ENCODE measurements at regions of chr16 and their contacts with region 1.

Region 1: DNA sequence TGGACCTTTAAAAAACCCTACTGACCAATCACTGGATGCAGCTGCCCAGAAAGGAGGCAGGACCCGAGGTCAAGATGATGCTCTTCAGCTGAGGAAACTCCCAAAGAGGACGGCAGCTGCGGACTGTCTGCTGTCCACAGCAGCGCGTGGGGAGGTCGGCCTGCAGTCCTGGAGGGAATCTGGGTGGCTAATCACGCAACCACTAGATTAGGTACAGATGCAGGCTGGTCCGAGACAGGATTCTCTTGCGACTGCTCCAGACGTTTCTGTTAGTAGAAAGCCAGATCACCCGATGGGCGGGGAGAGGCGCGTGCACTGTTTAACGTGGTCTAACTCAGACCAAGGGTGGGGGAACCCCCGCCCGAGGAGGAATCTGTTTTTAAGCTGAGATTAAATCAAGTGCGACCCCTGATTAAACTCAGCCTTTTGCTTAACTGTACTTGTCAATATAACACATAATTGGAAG is 8.8 kb downstream of the CTRB2 start:
- DNase-seq: no peak
- ATAC-seq: no peak
- H3K4me3 Mint-ChIP-seq: no peak overlapping the region
- H3K27ac Mint-ChIP-seq: no peak overlapping the region
- H3K4me1 Mint-ChIP-seq: peaks cover 13% of the 10 kb centered on the region
- H3K27me3 Mint-ChIP-seq: peaks cover 13% of the 10 kb centered on the region
- CTCF ChIP-seq: no peak

Region 2: DNA sequence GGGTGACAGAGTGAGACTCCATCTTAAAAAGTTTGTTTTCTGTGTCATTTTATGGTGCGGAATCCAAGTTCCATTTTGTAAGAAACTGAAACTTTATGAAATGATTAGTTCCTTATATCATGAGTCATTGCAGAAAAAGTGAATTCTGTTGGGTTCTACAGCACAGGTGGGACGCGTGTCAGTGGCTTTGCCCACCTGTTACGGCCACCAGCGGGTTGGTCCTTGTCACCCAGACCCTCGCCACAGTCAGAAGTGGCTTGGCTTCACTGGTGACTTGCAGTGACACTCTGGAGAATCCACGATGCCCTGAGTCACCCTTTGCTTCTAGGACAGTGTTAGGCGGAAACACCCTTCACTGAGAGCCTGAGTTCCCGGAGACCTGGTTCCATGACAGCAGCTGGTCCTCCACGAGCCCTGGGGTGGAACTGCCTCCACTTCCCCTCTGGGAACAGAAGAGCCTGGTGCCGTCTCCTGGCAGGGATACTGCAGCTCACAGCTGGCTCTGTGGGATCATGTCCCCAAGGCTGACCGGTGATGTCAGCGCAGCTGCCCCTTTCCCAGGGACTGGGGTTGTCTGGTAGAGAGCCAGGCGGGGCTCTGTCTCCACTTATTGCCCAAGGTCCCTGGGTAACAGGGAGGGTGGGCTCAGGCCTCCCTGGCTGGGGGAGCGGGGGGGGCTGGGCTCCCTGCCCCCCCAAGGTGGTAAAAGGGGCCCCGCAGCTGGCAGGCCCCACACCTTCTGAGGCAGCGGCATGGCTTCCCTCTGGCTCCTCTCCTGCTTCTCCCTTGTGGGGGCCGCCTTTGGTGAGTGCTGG is 20.3 kb after region 1 on chr16 and contains the start of gene CTRB1:
- CTCF ChIA-PET with region 1: interaction called, 62 read pairs
- POLR2A ChIA-PET with region 1: no interaction called
- intact Hi-C with region 1: loop called (anchors 1 kb)
- DNase-seq: peak; percentile 43
- ATAC-seq: peak; percentile 45
- H3K4me3 Mint-ChIP-seq: peak within 1 kb of the TSS; percentile 69
- H3K27ac Mint-ChIP-seq: peak within 1 kb of the TSS; percentile 82
- H3K4me1 Mint-ChIP-seq: peaks cover 21% of the 10 kb centered on the region
- H3K27me3 Mint-ChIP-seq: no peaks in the 10 kb centered on the region
- CTCF ChIP-seq: no peak
- total RNA-seq, gene CTRB1: not detected

Region 3: DNA sequence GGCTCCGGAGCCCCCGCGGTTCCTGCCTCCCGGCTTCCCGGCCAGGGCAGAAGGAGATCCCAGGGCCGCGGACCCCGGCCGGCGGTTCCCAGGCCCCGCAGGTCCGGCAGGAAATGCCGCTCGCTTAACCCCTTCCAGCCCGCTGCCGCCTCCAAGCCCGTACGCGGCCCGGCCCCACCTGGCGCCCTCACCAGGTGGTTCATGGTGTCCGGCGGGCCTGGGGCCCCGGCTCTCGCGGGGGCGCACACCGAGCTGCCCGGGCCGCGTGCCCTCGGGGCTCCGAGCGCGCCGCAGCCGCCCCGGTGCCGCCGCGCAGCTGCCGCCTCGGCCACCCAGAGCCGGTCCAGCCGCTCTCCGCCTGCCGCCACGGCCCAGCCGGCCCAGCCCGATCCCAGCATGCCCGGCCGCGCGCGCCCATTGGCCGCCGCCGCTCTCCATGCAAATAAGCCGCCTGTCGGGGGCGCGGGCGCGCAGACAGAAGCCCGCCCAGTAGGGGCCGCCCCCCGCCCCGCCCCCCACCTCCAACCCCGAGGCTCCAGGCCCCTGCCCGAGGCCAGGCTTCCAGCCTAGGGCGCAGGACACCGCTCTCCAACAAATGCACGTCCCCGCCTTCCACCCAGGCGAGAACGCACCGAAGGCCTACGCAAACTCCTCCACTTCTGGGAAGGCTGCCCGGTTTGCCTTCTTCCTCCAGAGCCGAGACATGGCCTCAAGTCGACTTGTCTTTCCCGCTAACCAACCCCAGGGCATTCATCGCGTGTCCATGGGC is 53.3 kb after region 1 on chr16 and contains the start of gene BCAR1:
- CTCF ChIA-PET with region 1: interaction called, 12 read pairs
- POLR2A ChIA-PET with region 1: no interaction called
- intact Hi-C with region 1: no loop called
- DNase-seq: peak; percentile 35
- ATAC-seq: peak; percentile 69
- H3K4me3 Mint-ChIP-seq: peak within 1 kb of the TSS; percentile 53
- H3K27ac Mint-ChIP-seq: no peak within 1 kb of the TSS
- H3K4me1 Mint-ChIP-seq: no peaks in the 10 kb centered on the region
- H3K27me3 Mint-ChIP-seq: peaks cover 34% of the 10 kb centered on the region
- CTCF ChIP-seq: no peak
- total RNA-seq, gene BCAR1: 0.34 to 0.87 TPM

Region 4: GRCh38 chr16:75361936-75362335 is 163.8 kb after region 1 on chr16:
- CTCF ChIA-PET with region 1: interaction called, 15 read pairs
- POLR2A ChIA-PET with region 1: no interaction called
- intact Hi-C with region 1: no loop called
- DNase-seq: no peak
- ATAC-seq: no peak
- H3K4me3 Mint-ChIP-seq: no peak overlapping the region
- H3K27ac Mint-ChIP-seq: no peak overlapping the region
- H3K4me1 Mint-ChIP-seq: no peaks in the 10 kb centered on the region
- H3K27me3 Mint-ChIP-seq: no peaks in the 10 kb centered on the region
- CTCF ChIP-seq: no peak

Region 5: DNA sequence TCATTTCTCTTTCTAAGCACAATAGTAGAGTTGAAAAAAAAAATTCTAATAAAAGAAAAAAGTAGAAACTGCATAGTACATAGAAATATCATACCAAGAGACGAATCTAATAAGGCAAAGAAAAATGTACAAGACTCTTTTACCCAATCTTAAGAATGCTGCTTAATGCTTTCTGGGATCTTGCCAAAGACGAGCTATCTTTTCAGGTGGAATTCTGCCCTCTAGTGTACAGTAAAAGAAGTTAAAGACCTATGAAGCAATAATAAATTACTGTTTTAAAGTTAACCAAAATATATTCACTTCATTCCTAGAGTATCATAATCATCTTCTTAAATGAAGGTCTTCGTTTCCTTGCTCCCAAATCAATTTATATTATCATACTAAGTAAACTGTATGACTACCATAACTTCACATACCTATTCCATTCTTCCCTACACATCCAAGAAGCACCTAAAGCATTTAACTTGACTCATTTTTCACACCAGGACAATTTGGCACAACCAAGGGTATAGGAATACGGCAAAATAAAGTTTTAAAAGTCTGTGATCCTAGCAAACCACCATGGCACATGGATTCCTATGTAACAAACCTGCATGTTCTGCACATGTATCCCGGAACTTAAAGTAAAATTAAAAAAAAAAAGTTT is 187.5 kb after region 1 on chr16:
- CTCF ChIA-PET with region 1: interaction called, 70 read pairs
- POLR2A ChIA-PET with region 1: no interaction called
- intact Hi-C with region 1: loop called (anchors 5 kb)
- DNase-seq: no peak
- ATAC-seq: peak; percentile 37
- H3K4me3 Mint-ChIP-seq: no peak overlapping the region
- H3K27ac Mint-ChIP-seq: no peak overlapping the region
- H3K4me1 Mint-ChIP-seq: peaks cover 16% of the 10 kb centered on the region
- H3K27me3 Mint-ChIP-seq: peaks cover 2% of the 10 kb centered on the region
- CTCF ChIP-seq: peak; percentile 72